MCF 10A (cell line): ENCODE measurements at regions of chr13 and their contacts with region 1.

Region 1: GRCh38 chr13:81872581-81872980 is 1531.7 kb upstream of the SPRY2 start:
- DNase-seq: peak; percentile 49
- H3K4me3 Mint-ChIP-seq: no peak overlapping the region
- H3K27ac Mint-ChIP-seq: no peak overlapping the region
- H3K4me1 Mint-ChIP-seq: no peaks in the 10 kb centered on the region
- H3K27me3 Mint-ChIP-seq: no peaks in the 10 kb centered on the region
- CTCF ChIP-seq: peak; percentile 37

Region 2: DNA sequence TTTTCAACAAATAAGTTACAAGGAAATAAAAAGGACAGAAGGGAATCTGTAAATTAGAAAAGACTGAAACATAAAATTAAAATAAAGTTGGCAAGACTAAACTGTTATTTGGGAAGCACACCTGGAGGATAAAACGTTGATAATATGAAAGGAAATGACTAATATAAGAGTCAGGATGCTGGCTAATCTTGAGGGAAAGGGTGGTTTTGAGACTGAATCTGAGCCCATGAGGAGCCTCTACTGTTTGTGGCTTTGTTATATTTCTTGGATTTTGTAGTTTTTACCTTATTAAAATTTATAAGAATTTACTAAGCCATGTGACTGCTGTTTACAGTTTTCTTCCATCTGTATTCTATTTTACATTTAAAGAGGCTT is 813.7 kb before region 1 on chr13:
- CTCF ChIA-PET with region 1: no interaction called
- POLR2A ChIA-PET with region 1: no interaction called
- intact Hi-C with region 1: loop called (anchors 1 kb)
- DNase-seq: peak; percentile 32
- H3K4me3 Mint-ChIP-seq: no peak overlapping the region
- H3K27ac Mint-ChIP-seq: peak overlapping the region; percentile 23
- H3K4me1 Mint-ChIP-seq: peaks cover 5% of the 10 kb centered on the region
- H3K27me3 Mint-ChIP-seq: no peaks in the 10 kb centered on the region
- CTCF ChIP-seq: no peak

Region 3: DNA sequence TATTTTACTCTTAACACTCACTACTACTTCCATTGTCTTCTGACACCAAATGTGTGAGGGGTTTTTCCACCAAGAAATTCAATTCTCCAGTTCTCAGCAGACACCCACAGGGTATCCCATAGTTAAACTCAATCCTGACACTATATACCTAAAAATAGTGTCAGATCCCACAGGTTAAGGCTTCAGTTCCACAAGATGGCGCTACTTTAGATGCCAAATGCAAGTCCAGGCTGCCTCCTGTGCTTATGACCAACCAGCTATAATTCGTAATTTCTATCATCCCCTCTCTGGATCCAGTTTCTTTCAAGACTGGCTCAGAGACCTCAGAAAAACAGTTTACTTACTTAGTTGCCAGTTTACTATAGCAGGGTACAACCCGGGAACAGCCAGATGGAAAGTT is 385.4 kb before region 1 on chr13:
- CTCF ChIA-PET with region 1: interaction called, 6 read pairs
- POLR2A ChIA-PET with region 1: no interaction called
- intact Hi-C with region 1: loop called (anchors 5 kb)
- DNase-seq: peak; percentile 70
- H3K4me3 Mint-ChIP-seq: no peak overlapping the region
- H3K27ac Mint-ChIP-seq: no peak overlapping the region
- H3K4me1 Mint-ChIP-seq: peaks cover 16% of the 10 kb centered on the region
- H3K27me3 Mint-ChIP-seq: no peaks in the 10 kb centered on the region
- CTCF ChIP-seq: peak; percentile 21

Region 4: GRCh38 chr13:81540777-81541176 is 331.8 kb before region 1 on chr13:
- CTCF ChIA-PET with region 1: interaction called, 11 read pairs
- POLR2A ChIA-PET with region 1: interaction called, 4 read pairs
- intact Hi-C with region 1: loop called (anchors 1 kb)
- DNase-seq: peak; percentile 28
- H3K4me3 Mint-ChIP-seq: no peak overlapping the region
- H3K27ac Mint-ChIP-seq: no peak overlapping the region
- H3K4me1 Mint-ChIP-seq: peaks cover 8% of the 10 kb centered on the region
- H3K27me3 Mint-ChIP-seq: no peaks in the 10 kb centered on the region
- CTCF ChIP-seq: peak; percentile 41

Region 5: GRCh38 chr13:81639984-81640582 is 232.5 kb before region 1 on chr13:
- CTCF ChIA-PET with region 1: interaction called, 17 read pairs
- POLR2A ChIA-PET with region 1: interaction called, 3 read pairs
- intact Hi-C with region 1: loop called (anchors 1 kb)
- DNase-seq: peak; percentile 58
- H3K4me3 Mint-ChIP-seq: no peak overlapping the region
- H3K27ac Mint-ChIP-seq: no peak overlapping the region
- H3K4me1 Mint-ChIP-seq: no peaks in the 10 kb centered on the region
- H3K27me3 Mint-ChIP-seq: no peaks in the 10 kb centered on the region
- CTCF ChIP-seq: peak; percentile 56